Activated CD8-positive, alpha-beta memory T cell treated with anti-CD3 and anti-CD28 coated beads, Interleukin-2, amount 10 ng/mL, durations not matched to agents 7 days and 5 days (primary cell): ENCODE measurements at regions of chr19 and their contacts with region 1.

Region 1: GRCh38 chr19:8580710-8581281 is 3.6 kb upstream of the MYO1F start:
- DNase-seq: peak; percentile 90
- ATAC-seq: peak; percentile 44
- H3K4me3 Mint-ChIP-seq: no peak overlapping the region
- H3K27ac Mint-ChIP-seq: no peak overlapping the region
- H3K4me1 Mint-ChIP-seq: peaks cover 28% of the 10 kb centered on the region
- H3K27me3 Mint-ChIP-seq: peaks cover 7% of the 10 kb centered on the region

Region 2: DNA sequence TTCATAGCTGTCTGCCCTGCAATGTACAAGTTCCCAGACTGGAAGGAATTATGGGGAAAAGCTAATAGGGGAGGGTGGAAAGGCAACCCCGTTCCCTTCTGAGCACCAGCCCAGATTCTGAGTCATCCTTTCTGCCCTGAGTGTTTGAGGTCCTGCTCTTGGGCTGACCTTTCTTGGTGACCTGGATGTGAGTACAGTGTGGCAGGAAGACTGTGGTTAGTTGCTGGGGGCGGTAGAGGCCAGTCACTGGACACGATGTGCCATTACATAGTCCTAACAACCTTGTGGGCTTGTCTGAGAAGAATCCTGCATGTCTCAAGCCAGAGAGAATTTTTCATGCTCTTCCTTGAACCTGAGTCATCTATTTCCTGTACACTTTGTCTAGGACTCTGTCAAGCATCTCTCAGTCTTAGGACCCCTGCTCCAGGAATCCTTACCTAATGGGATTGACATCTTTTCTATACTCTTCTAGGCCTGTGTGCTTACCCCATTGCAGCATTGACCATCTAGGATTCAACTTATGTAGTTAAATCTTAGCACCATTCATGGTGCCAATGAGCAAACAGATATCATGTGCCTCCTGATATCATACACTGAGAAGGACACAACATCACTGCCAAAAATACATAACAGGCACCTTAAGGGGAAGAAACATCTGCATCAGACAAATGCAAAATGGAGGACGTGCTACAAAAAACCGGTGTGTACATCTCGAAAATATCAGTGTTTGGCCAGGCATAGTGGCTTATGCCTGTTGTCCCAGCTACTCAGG is 225.0 kb before region 1 on chr19:
- CTCF ChIA-PET with region 1: interaction called, 18 read pairs
- DNase-seq: no peak
- ATAC-seq: no peak
- H3K4me3 Mint-ChIP-seq: no peak overlapping the region
- H3K27ac Mint-ChIP-seq: no peak overlapping the region
- H3K4me1 Mint-ChIP-seq: peaks cover 11% of the 10 kb centered on the region
- H3K27me3 Mint-ChIP-seq: peaks cover 13% of the 10 kb centered on the region

Region 3: GRCh38 chr19:8487137-8487851 is 93.5 kb before region 1 on chr19:
- CTCF ChIA-PET with region 1: interaction called, 46 read pairs
- DNase-seq: peak; percentile 78
- ATAC-seq: peak; percentile 78
- H3K4me3 Mint-ChIP-seq: no peak overlapping the region
- H3K27ac Mint-ChIP-seq: peak overlapping the region; percentile 82
- H3K4me1 Mint-ChIP-seq: peaks cover 39% of the 10 kb centered on the region
- H3K27me3 Mint-ChIP-seq: no peaks in the 10 kb centered on the region

Region 4: DNA sequence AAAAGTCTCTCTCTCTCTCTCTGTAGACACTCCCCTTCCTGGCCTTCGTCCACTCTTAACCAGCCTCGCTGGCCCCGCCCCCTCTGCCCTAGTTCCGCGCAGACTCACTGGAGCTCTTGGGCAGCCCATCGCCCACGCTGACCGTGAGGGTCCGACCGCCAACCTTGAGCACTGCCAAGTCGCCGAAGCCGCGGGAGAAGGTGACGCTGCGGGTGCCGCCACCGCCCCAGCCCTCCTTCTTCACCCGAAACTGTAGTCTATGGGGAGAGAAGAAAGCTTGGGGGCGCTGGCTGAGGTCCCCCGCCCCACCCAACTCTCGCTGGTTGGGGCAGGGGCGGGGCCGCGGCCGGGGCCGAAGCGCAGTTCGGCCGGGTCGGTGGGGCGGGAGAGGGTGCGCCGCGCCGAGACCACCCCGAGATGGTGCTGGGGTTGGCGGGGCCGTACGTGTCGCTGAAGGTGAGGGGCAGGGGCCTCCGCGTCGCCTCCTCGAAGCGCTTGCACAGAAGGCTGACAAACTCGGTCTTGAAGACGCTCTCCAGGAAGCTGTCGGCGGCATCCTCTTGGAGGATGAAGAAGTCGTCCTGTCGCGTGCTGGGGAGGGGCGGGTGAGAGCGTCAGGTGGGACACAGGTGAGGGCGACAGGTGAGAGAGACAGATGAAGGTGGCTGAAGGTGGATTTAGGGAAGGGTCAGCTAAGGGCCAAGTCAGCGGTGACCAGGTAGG is 54.3 kb before region 1 on chr19:
- CTCF ChIA-PET with region 1: interaction called, 136 read pairs
- DNase-seq: no peak
- ATAC-seq: no peak
- H3K4me3 Mint-ChIP-seq: no peak overlapping the region
- H3K27ac Mint-ChIP-seq: no peak overlapping the region
- H3K4me1 Mint-ChIP-seq: peaks cover 3% of the 10 kb centered on the region
- H3K27me3 Mint-ChIP-seq: no peaks in the 10 kb centered on the region

Region 5: GRCh38 chr19:8592231-8593009 is 11.6 kb after region 1 on chr19:
- CTCF ChIA-PET with region 1: interaction called, 55 read pairs
- DNase-seq: peak; percentile 90
- ATAC-seq: peak; percentile 91
- H3K4me3 Mint-ChIP-seq: peak overlapping the region; percentile 63
- H3K27ac Mint-ChIP-seq: no peak overlapping the region
- H3K4me1 Mint-ChIP-seq: peaks cover 11% of the 10 kb centered on the region
- H3K27me3 Mint-ChIP-seq: peaks cover 6% of the 10 kb centered on the region

Region 6: GRCh38 chr19:8654591-8655339 is 74.0 kb after region 1 on chr19:
- CTCF ChIA-PET with region 1: interaction called, 28 read pairs
- DNase-seq: peak; percentile 76
- ATAC-seq: peak; percentile 69
- H3K4me3 Mint-ChIP-seq: peak overlapping the region; percentile 35
- H3K27ac Mint-ChIP-seq: peak overlapping the region; percentile 19
- H3K4me1 Mint-ChIP-seq: peaks cover 23% of the 10 kb centered on the region
- H3K27me3 Mint-ChIP-seq: peaks cover 8% of the 10 kb centered on the region